ENCODE measurements at regions of chr20 and their contacts with region 1.

Region 1: DNA sequence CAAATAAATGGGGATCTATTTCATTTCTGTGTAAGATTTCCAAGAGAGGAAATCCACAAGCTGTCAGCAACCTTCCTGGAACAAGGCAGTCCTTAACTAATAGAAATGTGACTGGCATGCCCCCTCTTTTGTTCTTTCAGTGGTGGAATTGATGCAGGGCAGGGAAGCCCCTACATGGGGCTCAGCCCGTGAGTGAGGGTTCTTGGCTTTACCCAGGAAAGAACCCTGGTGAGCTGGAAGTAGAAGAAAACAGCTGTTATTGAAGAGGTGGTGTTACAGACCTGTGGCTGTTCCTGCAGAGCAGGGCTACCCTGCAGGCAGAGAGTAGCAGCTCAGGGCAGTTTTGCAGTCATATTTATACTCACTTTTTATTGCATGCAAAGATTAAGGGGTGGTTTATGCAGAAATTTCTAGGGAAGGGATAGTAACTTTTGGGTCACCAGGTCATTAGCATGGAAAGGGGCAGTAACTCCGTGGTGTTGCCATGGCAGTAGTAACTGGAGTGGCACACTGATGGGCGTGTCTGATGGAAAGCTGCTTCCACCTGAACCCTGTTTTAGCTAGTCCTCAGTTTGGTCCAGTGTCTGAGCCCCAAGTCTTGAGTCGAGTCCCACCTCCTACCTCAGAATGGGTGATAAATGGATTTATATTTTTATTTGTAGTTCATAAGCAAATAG is 88.7 kb upstream of the SCP2D1 start:
- DNase-seq: no peak
- H3K4me3 ChIP-seq: no peak overlapping the region
- H3K27ac ChIP-seq: no peak overlapping the region
- H3K4me1 ChIP-seq: no peaks in the 10 kb centered on the region
- H3K27me3 ChIP-seq: no peaks in the 10 kb centered on the region
- CTCF ChIP-seq: no peak
- POLR2A ChIP-seq: no peak

Region 2: GRCh38 chr20:18428490-18429173 is 296.3 kb before region 1 on chr20:
- intact Hi-C with region 1: no loop called
- DNase-seq: no peak
- H3K4me3 ChIP-seq: no peak overlapping the region
- H3K27ac ChIP-seq: no peak overlapping the region
- H3K4me1 ChIP-seq: no peaks in the 10 kb centered on the region
- H3K27me3 ChIP-seq: no peaks in the 10 kb centered on the region
- CTCF ChIP-seq: no peak
- POLR2A ChIP-seq: no peak

Region 3: GRCh38 chr20:18705490-18705889 is 19.4 kb before region 1 on chr20:
- intact Hi-C with region 1: loop called (anchors 1 kb)
- DNase-seq: no peak
- H3K4me3 ChIP-seq: no peak overlapping the region
- H3K27ac ChIP-seq: no peak overlapping the region
- H3K4me1 ChIP-seq: no peaks in the 10 kb centered on the region
- H3K27me3 ChIP-seq: no peaks in the 10 kb centered on the region
- CTCF ChIP-seq: no peak
- POLR2A ChIP-seq: no peak

Measured in prostate gland (tissue), 2 donors.